Activated T-helper 2 cell treated with anti-CD3 and anti-CD28 coated beads, Interferon-gamma antibody, Interleukin-2, Interleukin-4, amounts not matched to agents 10 μg/mL and 5 μg/mL and 100 μg/mL, durations not matched to agents 14 hours and 24 hours and 36 hours (primary cell): ENCODE measurements at regions of chr11 and their contacts with region 1.

Region 1: DNA sequence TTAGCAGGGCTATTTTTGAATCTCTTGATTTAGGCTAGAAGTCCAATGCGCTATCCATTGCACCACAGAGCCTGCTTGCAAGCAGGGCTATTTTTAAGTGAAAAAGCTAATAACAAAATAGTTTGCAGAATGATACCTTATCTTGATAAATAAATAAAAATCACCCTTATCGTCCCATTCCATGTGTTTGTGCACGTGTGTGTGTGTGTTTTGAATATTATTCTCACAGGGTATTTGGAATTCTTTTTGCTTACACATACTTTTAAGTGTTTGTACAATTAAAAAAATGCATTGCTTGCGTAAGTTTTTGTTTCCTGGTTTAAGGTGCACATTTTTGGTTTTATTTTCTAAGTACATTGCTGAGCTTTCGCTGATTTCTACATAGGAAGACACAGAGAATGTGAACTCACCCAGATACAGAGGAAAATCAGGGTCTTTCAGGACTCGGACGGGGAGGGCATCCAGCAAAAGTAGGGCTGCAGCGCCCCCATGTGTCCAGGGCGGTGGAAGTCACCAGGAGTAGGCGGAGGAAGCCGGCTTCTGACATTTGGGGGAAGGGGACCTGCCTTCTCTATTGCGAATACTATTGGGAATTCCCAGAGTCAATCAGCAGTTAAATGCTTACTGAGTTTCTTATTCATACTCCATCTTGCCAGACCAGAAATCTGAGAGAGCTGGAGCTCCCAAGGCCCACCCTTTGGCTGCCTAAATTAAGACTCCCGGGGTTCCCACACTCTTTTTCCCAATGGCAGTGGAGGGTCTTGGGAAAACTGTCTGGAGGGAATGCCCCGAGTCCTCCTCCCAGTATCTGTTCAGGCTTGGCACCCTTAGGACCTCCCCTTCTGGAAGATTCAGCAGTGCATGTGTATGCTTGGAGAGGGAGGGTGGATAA is 27.2 kb downstream of the SLC1A2 start:
- DNase-seq: peak; percentile 64
- H3K4me3 Mint-ChIP-seq: no peak overlapping the region
- H3K27ac Mint-ChIP-seq: no peak overlapping the region
- H3K4me1 Mint-ChIP-seq: peaks cover 26% of the 10 kb centered on the region
- H3K27me3 Mint-ChIP-seq: peaks cover 15% of the 10 kb centered on the region

Region 2: GRCh38 chr11:34926101-34926830 is 465.9 kb before region 1 on chr11:
- intact Hi-C with region 1: loop called (anchors 1 kb)
- DNase-seq: no peak
- H3K4me3 Mint-ChIP-seq: no peak overlapping the region
- H3K27ac Mint-ChIP-seq: no peak overlapping the region
- H3K4me1 Mint-ChIP-seq: peaks cover 15% of the 10 kb centered on the region
- H3K27me3 Mint-ChIP-seq: no peaks in the 10 kb centered on the region

Region 3: GRCh38 chr11:35013514-35014233 is 378.5 kb before region 1 on chr11:
- intact Hi-C with region 1: loop called (anchors 2 kb)
- DNase-seq: peak; percentile 24
- H3K4me3 Mint-ChIP-seq: no peak overlapping the region
- H3K27ac Mint-ChIP-seq: peak overlapping the region; percentile 72
- H3K4me1 Mint-ChIP-seq: peaks cover 54% of the 10 kb centered on the region
- H3K27me3 Mint-ChIP-seq: peaks cover 20% of the 10 kb centered on the region

Region 4: DNA sequence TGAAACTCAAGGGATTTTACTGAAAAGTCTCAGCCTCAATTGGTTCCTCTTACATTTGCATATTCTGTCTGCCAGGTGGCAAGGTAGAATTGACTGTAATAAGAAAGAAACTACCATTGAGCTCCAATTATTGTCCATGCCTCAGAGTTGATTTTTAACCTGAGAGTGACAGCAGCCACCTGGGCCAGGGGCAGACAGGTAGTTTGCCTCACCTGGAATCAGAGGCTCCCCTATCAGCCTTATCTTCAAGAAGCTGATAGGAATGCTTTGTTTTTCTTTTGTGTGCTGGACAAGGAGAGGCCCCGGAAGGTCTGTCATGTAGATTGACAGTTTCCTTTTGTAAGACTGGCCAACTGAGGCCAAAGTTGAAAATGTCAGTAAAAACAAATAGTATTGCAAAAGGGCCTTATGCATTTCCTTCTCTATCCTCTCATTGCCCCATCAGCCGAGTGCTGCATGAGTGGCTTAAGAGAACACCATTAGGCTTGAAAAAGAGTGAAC is 219.1 kb before region 1 on chr11:
- intact Hi-C with region 1: loop called (anchors 5 kb)
- DNase-seq: no peak
- H3K4me3 Mint-ChIP-seq: no peak overlapping the region
- H3K27ac Mint-ChIP-seq: peak overlapping the region; percentile 75
- H3K4me1 Mint-ChIP-seq: peaks cover 91% of the 10 kb centered on the region
- H3K27me3 Mint-ChIP-seq: no peaks in the 10 kb centered on the region

Region 5: DNA sequence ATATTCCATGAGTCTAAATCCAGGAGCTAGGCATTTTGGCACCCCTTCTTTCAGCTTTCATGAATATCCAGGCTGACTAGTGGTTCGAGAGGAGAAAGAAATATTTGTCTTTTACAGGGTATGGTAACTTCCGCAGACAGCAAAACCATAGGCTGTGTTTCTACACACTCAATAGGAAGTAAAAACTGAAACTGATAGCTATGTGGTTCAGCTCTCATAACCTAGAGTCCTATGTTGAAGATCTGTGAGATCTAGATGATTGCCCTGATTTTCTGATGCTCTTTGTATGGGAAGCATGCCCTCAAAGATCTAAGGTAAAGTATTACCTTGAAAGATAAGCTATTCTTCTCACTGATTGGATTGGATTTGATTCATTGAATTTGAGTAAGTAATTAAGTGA is 134.9 kb before region 1 on chr11:
- intact Hi-C with region 1: loop called (anchors 5 kb)
- DNase-seq: no peak
- H3K4me3 Mint-ChIP-seq: no peak overlapping the region
- H3K27ac Mint-ChIP-seq: no peak overlapping the region
- H3K4me1 Mint-ChIP-seq: peaks cover 20% of the 10 kb centered on the region
- H3K27me3 Mint-ChIP-seq: peaks cover 68% of the 10 kb centered on the region

Region 6: DNA sequence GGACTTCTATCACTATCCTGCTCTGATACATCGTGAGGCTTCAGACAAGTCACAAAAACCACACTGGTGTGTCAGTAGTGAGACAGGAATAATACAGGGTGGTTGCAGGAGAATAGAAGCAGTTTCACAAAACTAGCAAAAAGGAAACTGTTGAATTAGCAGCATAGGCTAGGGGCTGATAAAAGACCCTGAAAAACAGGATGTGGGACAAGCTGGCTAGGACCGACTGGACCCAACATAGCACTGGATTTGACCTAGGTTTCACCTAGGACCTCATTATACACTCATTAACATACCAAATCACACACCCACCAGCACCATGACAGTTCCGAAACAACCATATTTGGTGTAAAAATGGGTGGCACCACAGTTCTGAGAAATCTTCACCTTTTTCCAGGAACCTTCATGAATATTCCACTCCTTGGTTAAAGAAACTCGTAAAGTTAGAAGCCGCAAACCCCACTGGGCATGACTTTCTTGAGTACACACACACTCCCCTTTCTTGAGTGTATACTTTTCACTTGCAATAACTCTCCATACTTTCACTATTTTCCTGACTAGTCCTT is 49.1 kb before region 1 on chr11:
- intact Hi-C with region 1: loop called (anchors 2 kb)
- DNase-seq: peak; percentile 74
- H3K4me3 Mint-ChIP-seq: peak overlapping the region; percentile 20
- H3K27ac Mint-ChIP-seq: peak overlapping the region; percentile 81
- H3K4me1 Mint-ChIP-seq: peaks cover 46% of the 10 kb centered on the region
- H3K27me3 Mint-ChIP-seq: no peaks in the 10 kb centered on the region

Region 7: GRCh38 chr11:35376613-35377012 is 15.6 kb before region 1 on chr11:
- intact Hi-C with region 1: no loop called
- DNase-seq: no peak
- H3K4me3 Mint-ChIP-seq: no peak overlapping the region
- H3K27ac Mint-ChIP-seq: no peak overlapping the region
- H3K4me1 Mint-ChIP-seq: no peaks in the 10 kb centered on the region
- H3K27me3 Mint-ChIP-seq: peaks cover 16% of the 10 kb centered on the region